RWPE1 (cell line): ENCODE measurements at regions of chr2 and their contacts with region 1.

Region 1: GRCh38 chr2:239138610-239139009 is 262.2 kb downstream of the HDAC4 start:
- DNase-seq: no peak
- H3K27ac ChIP-seq: no peak overlapping the region
- CTCF ChIP-seq: no peak

Region 2: GRCh38 chr2:239466061-239466754 is 327.6 kb after region 1 on chr2:
- CTCF ChIA-PET with region 1: interaction called, 10 read pairs
- POLR2A ChIA-PET with region 1: no interaction called
- DNase-seq: no peak
- H3K27ac ChIP-seq: peak overlapping the region; percentile 80
- CTCF ChIP-seq: no peak